Left colon (tissue), 2 donors: ENCODE measurements at regions of chr1 and their contacts with region 1.

Region 1: DNA sequence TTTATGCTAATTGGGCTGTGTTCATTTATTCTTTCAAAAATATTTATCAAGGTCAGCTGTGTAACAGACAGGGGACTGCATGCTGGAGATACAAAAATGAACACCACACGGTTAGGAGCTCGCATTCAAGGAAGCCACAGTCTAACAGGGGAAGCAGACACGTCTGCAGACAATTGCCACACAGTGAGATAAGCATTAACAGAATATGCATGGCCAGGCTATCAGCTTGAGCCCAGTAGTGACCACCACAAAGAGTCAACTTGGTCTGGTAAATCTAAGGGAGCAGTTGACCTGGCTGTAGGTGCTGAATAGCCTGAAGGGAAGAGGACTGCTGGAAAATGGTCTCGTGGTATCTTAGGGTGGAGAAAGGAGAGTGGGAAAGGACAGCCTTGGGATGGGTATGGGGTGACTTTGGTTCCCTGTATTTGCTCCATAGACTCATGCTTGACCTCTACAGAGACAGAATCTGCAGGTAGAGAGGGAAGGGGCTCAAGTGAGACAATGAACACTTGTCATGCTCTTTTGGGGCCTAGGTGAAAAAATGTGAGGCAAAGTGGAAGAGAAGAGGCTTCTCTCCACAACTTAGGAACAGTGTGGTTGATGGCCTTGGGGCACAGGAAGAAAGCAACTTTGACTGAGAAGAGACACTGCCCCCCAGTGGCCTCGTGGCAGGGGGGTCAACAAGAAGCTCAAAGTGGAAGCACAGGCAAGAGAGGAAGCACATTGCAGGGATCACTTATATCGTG is 7.6 kb upstream of the NPL start:
- DNase-seq: peak; percentile 43 to 75
- ATAC-seq: peak; percentile 76

Region 2: GRCh38 chr1:182604169-182605164 is 177.5 kb before region 1 on chr1 and contains the start of gene RGS16:
- intact Hi-C with region 1: loop called (anchors 2 to 5 kb)
- DNase-seq: peak; percentile 94 to 98
- ATAC-seq: peak; percentile 98
- total RNA-seq, gene RGS16: 0.64 to 1.1 TPM

Region 3: DNA sequence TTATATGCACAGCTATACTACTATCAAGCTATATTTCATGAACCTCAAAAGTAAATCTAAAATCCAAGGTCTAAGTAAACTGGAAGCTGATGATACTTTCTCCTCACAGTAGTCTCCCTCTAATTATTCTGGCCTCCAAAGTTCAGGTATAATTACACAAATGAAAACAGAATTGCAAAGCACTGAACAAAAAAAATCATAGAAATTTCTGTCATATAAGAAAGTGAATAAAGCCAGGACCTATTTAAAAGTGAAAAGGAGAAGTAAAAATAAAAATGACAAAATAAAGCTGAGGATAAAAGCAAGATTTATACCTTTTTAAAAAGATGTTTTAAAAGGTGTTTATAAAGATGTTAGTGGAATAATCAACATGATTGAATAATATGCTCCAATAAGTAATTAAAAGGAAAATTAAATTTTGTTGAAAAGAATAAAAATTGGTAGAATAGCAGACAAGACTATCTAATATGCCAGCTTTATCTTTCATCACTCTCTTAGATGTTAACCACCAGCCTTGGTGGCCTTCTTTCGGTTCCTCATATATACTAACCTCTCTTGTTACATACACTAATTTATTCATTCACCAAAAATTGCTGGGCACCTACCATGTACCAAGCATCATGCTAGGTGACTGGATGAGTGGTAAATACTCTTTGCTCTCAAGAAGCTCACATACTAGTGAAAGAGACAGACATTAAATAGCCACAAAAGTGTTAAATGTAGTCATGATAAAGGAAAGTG is 145.8 kb after region 1 on chr1:
- intact Hi-C with region 1: no loop called
- DNase-seq: no peak
- ATAC-seq: no peak